ENCODE measurements at regions of chr6 and their contacts with region 1.

Region 1: DNA sequence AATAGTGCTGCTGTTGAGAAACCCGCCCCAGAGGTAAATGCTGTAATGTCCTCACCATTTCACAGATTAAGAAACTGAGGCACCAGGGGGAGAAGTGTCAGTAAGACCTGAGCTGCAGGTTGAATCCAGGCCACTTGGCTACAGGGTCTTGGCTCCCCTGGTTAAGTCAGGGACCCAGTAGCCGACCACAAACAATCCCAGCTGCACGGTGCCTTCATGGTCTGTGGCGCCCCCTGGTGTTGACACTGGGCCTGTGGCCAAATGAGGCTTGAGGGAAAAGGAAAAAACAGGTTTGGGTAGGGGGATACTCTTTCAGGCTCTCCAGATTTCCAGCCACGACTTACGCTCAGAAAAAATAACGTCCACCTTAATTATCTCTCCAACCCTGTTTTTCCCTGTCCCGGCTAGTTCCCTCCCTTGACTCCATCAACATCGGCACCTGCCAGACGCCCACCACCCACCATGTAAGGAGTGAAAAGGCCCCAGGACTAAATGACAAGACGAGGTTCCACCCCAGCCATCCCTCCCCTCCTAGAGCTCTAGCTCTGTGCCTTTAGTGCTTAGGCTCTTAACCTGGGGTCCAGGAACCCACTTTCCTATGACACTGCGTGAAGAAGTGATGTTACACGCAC is 47.7 kb upstream of the POLR1H start:
- DNase-seq: peak in 10 of 42 donors; percentile 10 to 79 (median 42)

Region 2: GRCh38 chr6:29847871-29848630 is 165.4 kb before region 1 on chr6:
- intact Hi-C with region 1: loop called (anchors 2 kb)
- DNase-seq: peak; percentile 60 to 94 (median 83)

Region 3: GRCh38 chr6:29887819-29888776 is 125.3 kb before region 1 on chr6:
- intact Hi-C with region 1: no loop called
- DNase-seq: peak; percentile 16 to 81 (median 50)

Measured in head of caudate nucleus (tissue), 42 donors.